ENCODE measurements at regions of chr1 and their contacts with region 1.

Region 1: DNA sequence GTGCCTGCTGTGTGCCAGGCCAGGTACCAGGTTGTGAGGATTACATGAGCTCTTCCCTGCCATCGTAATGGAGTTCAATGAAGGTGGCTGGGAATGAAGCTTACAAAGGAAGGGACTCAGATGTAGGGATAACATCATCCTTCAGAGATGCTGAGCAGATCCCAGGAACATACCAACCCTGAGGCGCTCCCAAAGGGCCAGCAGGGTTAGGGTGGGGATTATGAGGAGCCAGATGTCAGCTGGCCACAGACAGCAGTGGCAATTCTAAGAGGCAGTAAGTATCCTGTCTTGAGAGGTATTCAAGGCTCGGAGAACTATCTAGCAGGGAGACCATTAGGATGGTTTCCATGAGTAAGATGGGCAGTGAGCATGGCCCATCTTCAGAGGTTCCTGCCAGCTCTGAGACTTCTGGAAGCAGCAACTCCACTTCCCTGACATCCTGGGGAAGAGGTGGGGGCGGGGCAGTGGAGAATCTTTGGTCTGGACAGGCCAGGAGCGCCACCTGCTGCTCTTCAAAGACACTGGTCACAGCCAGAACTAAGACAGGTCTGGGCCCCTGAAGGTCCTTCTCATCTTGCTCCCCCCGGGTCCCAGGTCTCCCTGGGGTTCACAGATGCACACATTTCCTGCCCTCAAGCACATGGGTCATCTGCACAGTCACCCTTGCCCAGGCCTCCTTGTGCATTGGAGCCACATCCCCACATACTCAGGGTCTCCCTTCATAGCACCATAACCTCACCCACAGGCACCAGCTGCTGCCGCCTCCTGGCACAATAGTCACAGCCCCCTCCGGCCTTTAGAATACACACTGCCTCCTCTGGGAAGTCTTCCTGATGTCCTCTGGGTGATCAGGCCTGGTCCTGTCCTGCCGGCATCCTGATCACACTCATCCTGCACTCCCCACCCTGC is 2.7 kb upstream of the SDC3 start:
- DNase-seq: peak; percentile 85 to 96
- ATAC-seq: peak; percentile 82

Region 2: DNA sequence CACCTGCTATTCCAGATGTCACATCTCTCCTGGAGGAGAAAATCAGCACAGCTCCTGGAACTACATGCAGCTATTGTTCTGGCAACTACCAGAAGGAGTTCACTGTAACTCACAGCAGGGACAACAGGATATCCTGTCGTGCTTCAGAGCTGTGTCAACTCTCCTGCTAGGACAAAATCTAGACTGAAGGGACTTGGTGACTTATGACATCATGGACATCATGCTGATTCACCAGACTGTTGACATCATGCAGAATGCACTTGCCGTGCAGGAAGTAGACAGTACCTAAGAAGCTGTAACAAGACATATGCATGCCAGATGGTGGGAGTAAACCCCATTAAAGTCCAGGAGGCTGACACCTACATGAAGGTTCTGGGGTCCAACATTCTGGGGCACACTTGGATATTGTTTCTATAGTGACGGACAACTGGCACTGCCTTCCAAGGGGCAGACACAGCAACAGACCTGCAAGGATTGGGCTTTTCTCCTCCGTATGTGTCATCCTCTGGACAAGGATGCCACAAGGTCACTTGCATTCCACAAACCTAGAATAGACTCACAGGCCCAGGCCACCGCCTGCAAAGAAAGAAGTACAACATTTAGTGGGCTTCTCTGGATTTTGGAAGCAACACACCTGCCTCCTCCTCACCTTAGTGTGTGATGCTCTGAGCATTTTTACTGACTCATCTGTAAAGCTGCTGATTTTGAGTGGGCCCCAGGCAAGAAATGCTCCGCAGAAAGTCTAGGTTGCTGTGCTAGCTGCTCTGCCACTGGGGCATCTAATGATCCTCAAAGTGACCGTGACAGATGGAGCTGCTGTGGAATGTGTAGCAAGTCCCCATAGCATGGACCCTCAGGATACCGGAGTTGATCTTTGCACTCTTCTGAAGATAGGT is 437.1 kb before region 1 on chr1:
- intact Hi-C with region 1: no loop called
- DNase-seq: no peak
- ATAC-seq: no peak

Region 3: DNA sequence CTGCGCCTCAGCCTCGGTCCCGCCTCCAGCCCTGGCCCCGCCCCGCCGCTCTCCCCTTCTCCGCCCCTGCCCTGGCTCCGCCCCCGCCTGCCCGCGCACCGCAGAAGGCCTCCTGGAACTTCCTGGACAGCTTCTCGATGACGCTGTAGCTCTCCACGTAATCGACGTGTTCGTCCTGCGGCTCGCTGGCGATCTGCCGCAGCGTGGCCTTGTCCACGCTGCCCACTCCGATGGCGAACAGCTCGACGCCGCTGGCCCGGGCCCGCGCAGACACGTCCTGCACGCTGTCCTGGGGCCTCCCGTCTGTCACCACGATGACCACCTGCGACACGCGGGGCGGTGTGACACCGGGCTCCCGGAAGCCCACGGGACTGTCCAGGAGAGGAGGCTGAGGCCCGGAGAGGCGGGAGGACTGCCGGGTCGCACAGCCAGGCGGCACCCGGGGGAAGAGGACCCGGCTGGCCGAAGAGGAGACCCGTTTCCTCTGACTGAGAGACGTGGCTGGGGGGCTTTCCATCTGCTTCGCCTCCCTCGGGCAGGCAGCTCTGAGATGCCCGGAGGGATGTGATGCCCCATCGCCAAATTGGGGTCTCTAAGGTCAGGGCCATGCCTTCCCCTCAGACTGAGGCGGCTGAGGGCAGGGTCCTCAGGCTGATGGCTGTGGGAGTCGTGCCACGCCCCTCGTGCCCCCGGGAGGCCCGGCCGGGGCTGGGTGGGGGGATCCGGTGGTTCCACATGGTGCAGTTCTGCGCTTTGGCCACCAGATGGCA is 192.5 kb before region 1 on chr1:
- intact Hi-C with region 1: loop called in 1 of 2 experiments (anchors 10 kb)
- DNase-seq: peak; percentile 79 to 99
- ATAC-seq: peak; percentile 78

Region 4: DNA sequence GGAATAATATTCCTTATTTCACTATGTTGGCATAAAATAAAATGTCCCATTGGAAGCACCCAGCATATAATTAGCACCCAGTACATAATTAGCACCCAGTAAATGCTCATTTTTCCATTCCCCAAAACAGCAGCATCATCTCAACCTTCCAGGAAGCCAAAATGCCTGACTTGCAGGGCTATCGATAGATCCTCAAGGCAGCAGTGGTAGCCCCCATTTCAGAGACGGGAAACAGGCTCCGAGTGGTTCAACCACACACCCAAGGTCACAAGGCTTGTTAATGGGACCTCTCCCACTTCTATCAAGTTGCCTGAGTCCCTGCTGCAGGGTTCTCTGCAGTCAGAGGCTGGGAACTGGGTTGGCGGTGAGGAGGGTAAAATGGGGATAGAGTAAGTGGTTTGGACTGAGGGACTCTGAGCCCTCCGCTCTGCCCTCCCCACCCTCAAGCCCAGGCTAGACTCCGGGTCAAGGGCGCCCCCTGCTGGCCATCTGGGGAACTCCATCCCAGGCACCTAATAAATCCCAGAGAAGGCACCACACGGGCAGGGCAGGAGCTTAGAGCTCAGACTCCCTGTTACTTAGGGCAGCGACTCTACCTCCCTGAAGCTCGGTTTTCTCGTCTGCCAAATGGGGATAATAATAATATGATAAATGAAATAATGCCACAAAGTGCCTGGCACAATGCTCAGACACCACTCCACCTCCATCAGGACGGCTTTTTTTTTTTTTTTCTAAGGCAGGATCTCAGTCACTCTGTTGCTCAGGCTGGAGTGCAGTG is 131.8 kb before region 1 on chr1:
- intact Hi-C with region 1: loop called in 1 of 2 experiments (anchors 5 kb)
- DNase-seq: peak; percentile 64 to 91
- ATAC-seq: peak; percentile 83

Region 5: GRCh38 chr1:30801771-30802198 is 109.5 kb before region 1 on chr1:
- intact Hi-C with region 1: loop called (anchors 5 kb)
- DNase-seq: peak; percentile 55 to 85
- ATAC-seq: peak; percentile 74

Region 6: GRCh38 chr1:31043631-31044030 is 132.3 kb after region 1 on chr1:
- intact Hi-C with region 1: no loop called
- DNase-seq: no peak
- ATAC-seq: no peak